ENCODE measurements at regions of chr5 and their contacts with region 1.

Region 1: DNA sequence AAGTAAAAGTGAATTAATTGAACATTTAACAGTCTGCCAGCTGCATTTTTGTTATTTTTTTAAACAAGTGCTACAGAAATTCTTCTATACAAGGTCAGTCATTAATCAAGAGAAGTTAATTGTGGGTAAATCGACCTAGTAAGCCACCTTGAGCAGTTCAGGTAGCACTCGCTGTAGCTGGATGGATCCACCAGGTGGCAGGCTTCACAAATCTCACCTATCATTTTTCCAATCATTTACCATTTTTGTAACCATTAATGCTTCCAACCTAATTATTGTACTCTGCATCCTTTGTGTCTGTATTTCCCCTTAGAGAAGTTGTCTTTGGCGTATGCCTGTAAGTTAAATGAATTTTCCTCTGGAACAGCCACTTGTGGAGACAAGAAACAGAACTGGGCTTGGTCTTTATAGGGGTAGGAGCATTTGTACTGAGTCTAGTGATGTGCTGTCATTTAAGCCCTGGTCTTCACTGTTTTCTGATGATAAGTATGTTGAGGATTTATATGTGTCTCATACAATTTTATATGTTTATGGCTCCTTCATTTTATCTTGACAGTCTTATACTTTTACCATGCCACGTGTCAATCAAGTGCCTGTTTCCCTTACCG is 39.5 kb downstream of the CD180 start:
- DNase-seq: peak; percentile 67
- ATAC-seq: peak; percentile 81
- H3K4me3 Mint-ChIP-seq: no peak overlapping the region
- H3K27ac Mint-ChIP-seq: peak overlapping the region; percentile 21
- H3K4me1 Mint-ChIP-seq: peaks cover 39% of the 10 kb centered on the region
- H3K27me3 Mint-ChIP-seq: no peaks in the 10 kb centered on the region
- CTCF ChIP-seq: peak; percentile 92

Region 2: DNA sequence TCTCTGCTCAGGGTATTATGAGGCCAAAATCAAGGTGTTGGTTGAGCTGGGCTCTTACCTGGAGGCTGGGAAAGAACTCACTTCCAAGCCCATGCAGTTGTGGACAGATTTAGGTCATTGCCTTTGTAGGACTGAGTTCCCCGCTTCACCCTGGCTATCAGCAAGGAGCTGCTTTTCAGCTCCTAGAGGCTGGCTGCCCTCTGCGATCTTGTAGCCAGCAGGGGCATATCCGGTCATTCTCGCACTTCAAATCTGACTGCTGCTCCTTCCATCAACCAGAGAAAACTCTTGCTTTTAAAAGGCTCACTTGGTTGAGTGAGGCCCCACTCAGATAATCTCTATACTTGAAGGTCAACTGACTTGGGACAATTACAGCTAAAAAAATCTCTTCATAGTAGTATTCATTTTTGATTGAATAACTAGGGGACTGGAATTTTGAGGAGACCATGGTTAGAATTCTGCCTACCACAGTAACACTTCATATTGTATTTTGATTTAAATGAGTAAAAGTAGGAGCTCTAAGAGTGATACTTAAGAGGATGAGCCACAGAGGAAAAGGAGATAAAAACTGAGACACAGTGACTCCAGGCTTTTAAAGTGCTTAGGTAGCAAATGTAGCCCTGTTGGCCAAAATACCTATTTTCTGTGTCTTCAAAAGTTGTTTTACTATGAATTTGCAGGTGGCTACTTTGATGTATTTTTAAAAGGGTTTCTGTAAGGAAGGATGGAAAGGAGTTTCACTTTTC is 97.9 kb before region 1 on chr5:
- CTCF ChIA-PET with region 1: no interaction called
- POLR2A ChIA-PET with region 1: no interaction called
- intact Hi-C with region 1: no loop called
- DNase-seq: no peak
- ATAC-seq: no peak
- H3K4me3 Mint-ChIP-seq: no peak overlapping the region
- H3K27ac Mint-ChIP-seq: no peak overlapping the region
- H3K4me1 Mint-ChIP-seq: peaks cover 8% of the 10 kb centered on the region
- H3K27me3 Mint-ChIP-seq: no peaks in the 10 kb centered on the region
- CTCF ChIP-seq: no peak

Region 3: DNA sequence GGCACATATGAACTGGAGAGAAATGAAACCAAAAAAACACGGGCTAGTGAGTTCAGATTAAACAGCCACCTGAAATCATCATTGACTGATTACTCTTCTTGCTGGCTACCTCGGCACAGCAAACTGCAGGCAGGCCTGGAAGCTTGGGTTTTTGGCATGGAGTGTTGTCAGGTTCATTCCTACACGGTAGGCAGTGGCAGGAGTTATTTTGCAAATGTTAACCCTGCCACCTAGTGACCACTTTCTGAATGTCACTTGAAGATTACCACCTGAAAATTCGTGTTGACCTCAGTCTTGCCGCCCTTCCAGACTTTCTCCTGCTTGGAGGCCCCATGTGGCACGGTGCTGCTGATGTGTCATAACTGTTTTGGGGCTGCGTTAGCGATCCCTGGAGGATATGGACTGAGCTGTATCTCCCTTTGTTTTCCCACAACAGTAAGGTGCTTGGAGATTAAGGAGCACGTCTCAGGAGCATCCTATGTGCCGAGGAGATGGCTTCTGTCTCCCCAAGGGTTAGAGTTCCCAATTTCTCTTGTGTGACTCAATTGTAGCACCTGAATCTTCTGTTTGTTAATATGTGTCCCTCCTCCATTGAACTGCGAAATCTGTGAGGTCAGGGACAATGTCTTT is 52.2 kb after region 1 on chr5:
- CTCF ChIA-PET with region 1: interaction called, 349 read pairs
- POLR2A ChIA-PET with region 1: interaction called, 8 read pairs
- intact Hi-C with region 1: loop called (anchors 1 kb)
- DNase-seq: peak; percentile 71
- ATAC-seq: peak; percentile 52
- H3K4me3 Mint-ChIP-seq: no peak overlapping the region
- H3K27ac Mint-ChIP-seq: peak overlapping the region; percentile 25
- H3K4me1 Mint-ChIP-seq: peaks cover 55% of the 10 kb centered on the region
- H3K27me3 Mint-ChIP-seq: peaks cover 2% of the 10 kb centered on the region
- CTCF ChIP-seq: peak; percentile 87

Region 4: GRCh38 chr5:67215583-67216471 is 58.7 kb after region 1 on chr5:
- CTCF ChIA-PET with region 1: interaction called, 349 read pairs
- POLR2A ChIA-PET with region 1: interaction called, 3 read pairs
- intact Hi-C with region 1: no loop called
- DNase-seq: peak; percentile 84
- ATAC-seq: peak; percentile 96
- H3K4me3 Mint-ChIP-seq: peak overlapping the region; percentile 49
- H3K27ac Mint-ChIP-seq: peak overlapping the region; percentile 91
- H3K4me1 Mint-ChIP-seq: peaks cover 51% of the 10 kb centered on the region
- H3K27me3 Mint-ChIP-seq: no peaks in the 10 kb centered on the region
- CTCF ChIP-seq: no peak

Measured in activated CD8-positive, alpha-beta T cell treated with anti-CD3 and anti-CD28 coated beads for 36 hours (primary cell).